Left colon (tissue), 2 donors: ENCODE measurements at regions of chr14 and their contacts with region 1.

Region 1: GRCh38 chr14:67704484-67705089 is 2.9 kb downstream of the RDH12 start:
- DNase-seq: no peak
- ATAC-seq: peak; percentile 92

Region 2: DNA sequence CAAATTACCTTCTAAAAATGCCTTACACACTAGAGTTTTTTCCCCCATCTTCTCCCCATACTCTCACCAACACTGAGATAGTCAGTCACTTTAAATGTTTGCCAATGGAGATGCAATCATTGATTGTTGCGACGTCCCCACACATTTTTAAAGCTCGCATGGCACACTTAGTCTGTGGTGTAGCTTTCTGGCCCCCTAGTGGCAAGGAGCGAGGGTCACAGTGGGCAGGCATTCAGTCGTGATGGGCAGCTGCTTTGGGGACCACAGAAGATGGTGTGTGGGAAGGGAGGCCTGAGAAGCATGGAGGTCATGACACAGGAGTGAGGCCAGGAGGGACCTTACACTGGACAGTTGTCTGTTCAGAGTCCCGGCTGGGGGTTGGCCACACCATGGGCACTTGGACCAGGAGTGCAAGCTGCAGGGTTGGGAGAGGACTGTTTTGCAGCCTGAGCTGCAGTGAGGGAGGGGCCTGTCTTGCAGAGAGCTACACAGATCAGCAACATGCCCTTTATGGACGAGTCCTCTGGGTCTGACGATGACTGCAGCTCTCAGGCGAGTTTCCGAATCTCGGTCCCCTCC is 133.2 kb before region 1 on chr14:
- intact Hi-C with region 1: no loop called
- DNase-seq: peak; percentile 40 to 77
- ATAC-seq: peak; percentile 76

Region 3: DNA sequence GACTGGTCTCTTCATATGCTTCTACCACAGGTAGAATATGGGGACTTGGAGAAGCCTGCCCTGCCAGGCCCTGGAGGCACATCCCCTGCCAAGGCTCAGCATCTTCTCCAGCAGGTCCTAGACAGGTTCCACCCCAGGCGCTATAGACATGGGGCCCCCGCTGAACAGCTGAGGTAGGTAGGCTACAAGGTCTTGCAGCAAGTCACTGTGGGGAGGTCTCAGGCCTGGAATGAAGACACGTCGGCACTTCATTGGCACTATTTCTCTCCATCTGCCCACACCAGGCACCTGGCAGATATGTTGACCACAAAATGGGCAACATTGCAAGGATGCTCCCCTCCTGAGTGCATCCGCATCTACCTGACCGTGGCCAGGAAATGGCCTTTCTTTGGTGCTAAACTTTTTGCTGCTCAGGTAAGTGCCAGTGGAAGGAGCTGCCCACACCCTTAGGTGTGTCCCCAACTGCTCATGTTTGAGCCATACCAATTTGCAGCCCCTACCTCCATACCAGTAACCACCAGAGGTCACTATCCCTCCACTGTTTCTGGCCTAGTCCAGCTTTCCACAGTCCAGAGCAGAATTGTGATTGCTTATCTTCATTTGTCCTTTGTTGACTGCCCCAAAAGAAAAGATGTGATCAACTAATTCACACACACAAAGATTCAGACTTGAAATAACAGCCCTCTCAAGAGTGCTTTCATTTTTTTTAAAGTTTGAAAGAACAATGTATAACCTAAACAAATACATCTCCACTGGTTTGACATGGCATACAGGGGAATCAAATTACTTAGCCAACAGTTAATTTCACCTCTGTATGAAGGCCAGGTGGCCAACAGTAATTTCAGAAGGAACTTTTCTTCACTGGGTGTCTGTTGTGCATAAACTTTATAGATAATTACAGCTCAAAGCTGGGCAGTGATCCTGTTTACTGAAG is 120.6 kb before region 1 on chr14:
- intact Hi-C with region 1: loop called in 1 of 2 experiments (anchors 10 kb)
- DNase-seq: peak in 1 of 2 donors; percentile 28
- ATAC-seq: peak; percentile 82